SK-N-SH (cell line): ENCODE measurements at regions of chr2 and their contacts with region 1.

Region 1: GRCh38 chr2:43455731-43456642 is 139.9 kb downstream of the THADA start:
- DNase-seq: no peak
- H3K4me3 ChIP-seq: no peak overlapping the region
- H3K27ac ChIP-seq: no peak overlapping the region
- H3K4me1 ChIP-seq: peaks cover 6 to 45% of the 10 kb centered on the region in 2 experiments; a peak in 3 of 4 replicates
- H3K27me3 ChIP-seq: no peaks in the 10 kb centered on the region
- CTCF ChIP-seq: no peak; the same call in 1 of the 2 replicates
- EP300 ChIP-seq: no peak
- RAD21 ChIP-seq: peak; percentile 20; the same call in 1 of the 2 replicates

Region 2: DNA sequence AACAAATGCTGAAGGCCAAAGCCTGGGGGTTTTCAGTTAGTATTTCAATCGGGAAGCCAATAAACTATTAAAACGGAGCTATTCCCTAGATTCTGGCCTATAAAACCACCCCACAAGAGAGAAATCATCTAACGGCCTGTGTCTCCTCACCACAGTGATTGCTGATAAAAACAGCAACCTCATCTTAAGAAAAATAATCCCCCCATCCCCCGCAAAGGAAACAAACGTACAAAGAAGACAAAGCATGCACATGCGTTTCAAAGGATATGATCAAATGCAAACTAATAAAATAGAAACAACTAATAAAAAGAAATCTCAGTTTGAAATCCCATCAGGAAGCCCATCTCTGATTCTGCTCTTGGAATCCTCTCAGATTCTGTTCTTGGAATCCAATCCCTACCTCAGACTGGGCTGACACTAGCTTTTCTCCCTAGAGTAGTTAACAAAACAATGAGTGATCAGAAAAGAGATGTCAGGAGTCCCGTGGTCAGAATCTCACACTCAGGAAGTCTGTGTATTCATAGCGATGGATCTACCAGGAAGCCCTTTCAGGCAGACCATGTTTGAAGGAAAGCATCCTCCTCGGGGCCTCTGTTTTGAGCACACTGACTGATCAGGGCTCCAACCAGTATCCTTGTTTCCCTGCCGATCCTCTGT is 10.9 kb before region 1 on chr2:
- CTCF ChIA-PET with region 1: interaction called, 12 read pairs
- POLR2A ChIA-PET with region 1: no interaction called
- DNase-seq: no peak
- H3K4me3 ChIP-seq: no peak overlapping the region
- H3K27ac ChIP-seq: no peak overlapping the region
- H3K4me1 ChIP-seq: peaks cover 0 to 6% of the 10 kb centered on the region in 2 experiments; a peak in 2 of 4 replicates
- H3K27me3 ChIP-seq: no peaks in the 10 kb centered on the region
- CTCF ChIP-seq: no peak
- EP300 ChIP-seq: no peak
- RAD21 ChIP-seq: no peak